Activated B cell treated with CpG ODN at 0.5 μM for 24 hours (primary cell): ENCODE measurements at regions of chr21 and their contacts with region 1.

Region 1: DNA sequence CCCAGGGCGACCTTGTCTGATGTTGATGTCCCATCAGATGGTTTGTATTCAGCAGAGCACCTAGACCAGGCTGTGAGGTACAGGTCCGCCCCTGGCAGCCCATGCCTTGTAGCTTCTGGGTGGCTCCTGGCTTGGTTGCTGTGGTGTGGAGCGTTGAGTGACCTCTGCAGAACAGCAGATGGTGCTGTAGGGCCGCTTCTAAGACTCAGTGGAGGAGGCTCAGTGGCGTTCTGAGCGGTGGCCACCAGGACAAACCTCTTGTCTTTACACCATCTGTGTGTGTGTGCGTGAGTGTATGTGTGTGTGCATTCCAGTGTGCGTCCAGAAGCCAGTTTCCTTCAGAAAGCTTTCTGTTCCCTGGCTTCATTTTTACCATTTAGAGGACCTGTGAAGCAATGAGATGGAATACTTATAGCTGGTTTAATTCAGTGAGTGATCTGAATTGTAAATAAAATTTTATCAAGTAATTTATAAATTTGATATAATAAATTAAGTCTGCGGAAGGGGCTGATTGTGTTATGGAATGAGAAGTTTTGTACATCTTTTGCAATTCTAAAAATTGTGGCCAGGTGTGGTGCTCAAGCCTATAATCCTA is 66.1 kb downstream of the ADARB1 start:
- DNase-seq: peak; percentile 46
- ATAC-seq: peak; percentile 97
- H3K4me3 Mint-ChIP-seq: no peak overlapping the region
- H3K27ac Mint-ChIP-seq: no peak overlapping the region
- H3K4me1 Mint-ChIP-seq: peaks cover 15% of the 10 kb centered on the region
- H3K27me3 Mint-ChIP-seq: no peaks in the 10 kb centered on the region
- CTCF ChIP-seq: no peak

Region 2: DNA sequence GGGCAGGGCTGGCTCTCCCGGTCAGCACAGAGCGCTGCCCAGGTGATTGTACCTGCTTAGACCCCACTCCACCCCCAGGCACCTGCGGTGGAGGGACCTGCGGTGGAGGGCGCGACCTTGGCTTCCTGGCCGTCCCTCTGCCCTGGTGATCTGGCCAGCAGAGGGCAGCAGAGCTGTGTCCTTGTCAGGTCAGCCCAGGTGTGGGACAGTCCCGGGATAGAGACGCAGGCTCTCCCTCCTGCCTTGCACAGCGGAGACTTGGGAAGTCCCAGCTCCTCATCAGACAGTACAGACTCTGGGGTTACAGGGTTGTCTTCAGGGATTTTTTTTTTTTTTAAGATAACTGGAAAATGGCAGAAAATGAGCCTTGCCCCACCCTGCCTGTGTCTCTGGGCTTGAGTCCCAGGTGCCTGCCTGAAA is 190.7 kb before region 1 on chr21:
- CTCF ChIA-PET with region 1: interaction called, 218 read pairs
- POLR2A ChIA-PET with region 1: no interaction called
- intact Hi-C with region 1: loop called (anchors 1 kb)
- DNase-seq: peak; percentile 76
- ATAC-seq: peak; percentile 91
- H3K4me3 Mint-ChIP-seq: no peak overlapping the region
- H3K27ac Mint-ChIP-seq: no peak overlapping the region
- H3K4me1 Mint-ChIP-seq: peaks cover 40% of the 10 kb centered on the region
- H3K27me3 Mint-ChIP-seq: no peaks in the 10 kb centered on the region
- CTCF ChIP-seq: peak; percentile 86

Region 3: GRCh38 chr21:45098867-45099266 is 41.6 kb before region 1 on chr21:
- CTCF ChIA-PET with region 1: interaction called, 20 read pairs
- POLR2A ChIA-PET with region 1: no interaction called
- intact Hi-C with region 1: no loop called
- DNase-seq: no peak
- ATAC-seq: peak; percentile 46
- H3K4me3 Mint-ChIP-seq: no peak overlapping the region
- H3K27ac Mint-ChIP-seq: peak overlapping the region; percentile 60
- H3K4me1 Mint-ChIP-seq: peaks cover 85% of the 10 kb centered on the region
- H3K27me3 Mint-ChIP-seq: no peaks in the 10 kb centered on the region
- CTCF ChIP-seq: no peak

Region 4: DNA sequence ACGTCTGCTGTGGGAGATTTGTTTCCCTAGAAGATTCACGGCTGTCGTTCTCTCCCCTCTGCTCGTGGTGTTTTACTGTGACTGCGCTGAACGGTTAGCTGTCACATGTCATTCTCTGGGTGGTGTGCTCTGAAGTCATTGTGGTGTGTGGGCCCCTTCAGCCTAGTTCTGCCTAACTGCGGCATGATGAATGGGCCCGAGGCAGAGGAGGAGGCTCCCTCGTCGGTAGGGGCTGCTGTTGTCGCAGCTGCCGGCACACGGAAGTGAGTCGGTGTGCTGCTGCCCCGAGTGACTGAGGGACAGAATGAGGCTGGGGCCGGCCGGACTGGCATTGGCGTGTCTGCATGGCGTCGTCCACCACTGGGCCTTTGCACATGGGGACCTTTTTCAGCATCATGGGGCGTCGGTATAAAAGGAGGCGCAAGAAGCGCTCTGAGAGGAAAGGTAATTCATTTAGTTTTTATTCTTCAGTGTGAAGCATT is 11.9 kb after region 1 on chr21:
- CTCF ChIA-PET with region 1: interaction called, 61 read pairs
- POLR2A ChIA-PET with region 1: no interaction called
- intact Hi-C with region 1: no loop called
- DNase-seq: peak; percentile 51
- ATAC-seq: peak; percentile 98
- H3K4me3 Mint-ChIP-seq: peak overlapping the region; percentile 68
- H3K27ac Mint-ChIP-seq: peak overlapping the region; percentile 26
- H3K4me1 Mint-ChIP-seq: peaks cover 44% of the 10 kb centered on the region
- H3K27me3 Mint-ChIP-seq: no peaks in the 10 kb centered on the region
- CTCF ChIP-seq: no peak

Region 5: DNA sequence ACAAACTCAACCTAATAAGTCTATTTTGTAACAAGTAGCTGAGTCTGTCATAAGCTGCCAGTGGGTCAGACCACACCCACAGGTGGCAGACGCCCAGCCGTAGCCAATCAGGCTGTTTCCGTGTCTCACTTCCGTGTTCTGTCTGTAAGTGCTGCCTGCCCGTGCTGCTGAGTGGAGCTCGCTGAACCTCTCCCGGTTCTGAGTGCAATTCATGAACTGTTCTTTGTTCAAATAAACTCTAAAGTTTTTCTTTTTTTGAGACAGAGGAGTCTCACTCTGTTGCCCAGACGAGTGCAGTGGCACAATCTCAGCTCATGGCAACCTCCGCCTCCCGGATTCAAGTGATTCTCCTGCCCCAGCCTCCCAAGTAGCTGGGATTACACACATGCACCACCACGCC is 122.2 kb after region 1 on chr21:
- CTCF ChIA-PET with region 1: no interaction called
- POLR2A ChIA-PET with region 1: no interaction called
- intact Hi-C with region 1: no loop called
- DNase-seq: no peak
- ATAC-seq: no peak
- H3K4me3 Mint-ChIP-seq: no peak overlapping the region
- H3K27ac Mint-ChIP-seq: no peak overlapping the region
- H3K4me1 Mint-ChIP-seq: no peaks in the 10 kb centered on the region
- H3K27me3 Mint-ChIP-seq: no peaks in the 10 kb centered on the region
- CTCF ChIP-seq: no peak

Region 6: GRCh38 chr21:45596704-45597318 is 456.4 kb after region 1 on chr21:
- CTCF ChIA-PET with region 1: interaction called, 4 read pairs
- POLR2A ChIA-PET with region 1: no interaction called
- intact Hi-C with region 1: loop called (anchors 2 kb)
- DNase-seq: peak; percentile 74
- ATAC-seq: peak; percentile 82
- H3K4me3 Mint-ChIP-seq: no peak overlapping the region
- H3K27ac Mint-ChIP-seq: no peak overlapping the region
- H3K4me1 Mint-ChIP-seq: peaks cover 10% of the 10 kb centered on the region
- H3K27me3 Mint-ChIP-seq: peaks cover 13% of the 10 kb centered on the region
- CTCF ChIP-seq: no peak